ENCODE measurements at regions of chr1 and their contacts with region 1.

Region 1: DNA sequence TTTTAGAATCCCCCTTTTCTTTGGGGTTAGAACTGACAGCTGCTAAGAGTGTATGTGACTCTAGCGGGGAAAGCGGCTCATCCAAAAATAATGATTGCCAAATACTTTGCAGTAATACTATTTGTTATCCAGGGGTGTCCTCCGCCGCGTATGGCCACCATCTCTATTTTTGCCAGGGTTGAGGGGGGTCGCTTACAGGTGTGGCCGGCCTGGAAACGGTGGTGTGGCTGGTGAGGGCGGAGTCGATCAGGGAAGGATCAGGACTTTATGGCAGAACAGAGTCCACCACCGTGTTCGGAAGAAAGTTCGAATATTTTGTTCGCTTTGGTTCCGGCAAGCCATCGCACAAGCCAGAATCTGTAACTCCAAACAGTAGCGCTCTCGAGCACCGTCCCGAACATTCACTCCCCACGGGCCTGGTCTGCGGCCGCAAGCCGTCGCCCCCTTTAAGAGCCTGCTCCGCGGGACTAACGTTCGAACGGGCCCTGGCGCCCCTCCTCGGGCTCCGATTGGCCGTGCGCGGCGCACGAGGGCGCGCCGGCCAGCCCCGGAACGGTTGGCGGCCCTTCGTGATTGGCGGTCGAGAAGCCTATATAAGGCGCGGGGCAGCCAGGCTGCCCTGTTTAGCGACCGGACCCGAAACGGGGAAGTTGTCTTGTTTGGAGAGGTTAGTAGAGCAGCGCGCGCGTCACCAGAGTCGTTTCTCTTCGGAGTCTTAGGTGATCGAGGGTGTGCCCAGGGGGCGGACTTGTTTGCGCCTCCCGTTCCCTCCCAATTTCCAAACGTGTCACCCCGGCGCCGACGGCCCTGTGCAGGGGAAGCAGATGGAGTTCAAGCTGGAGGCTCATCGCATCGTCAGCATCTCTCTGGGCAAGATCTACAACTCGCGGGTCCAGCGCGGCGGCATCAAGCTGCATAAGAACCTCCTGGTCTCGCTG is at the start of gene IER5:
- DNase-seq: peak; percentile 97
- H3K4me3 Mint-ChIP-seq: peak within 1 kb of the TSS; percentile 93
- H3K27ac Mint-ChIP-seq: peak within 1 kb of the TSS; percentile 97
- H3K4me1 Mint-ChIP-seq: peaks cover 26% of the 10 kb centered on the region
- H3K27me3 Mint-ChIP-seq: no peaks in the 10 kb centered on the region
- CTCF ChIP-seq: no peak
- total RNA-seq, gene IER5: 11.4 and 12.2 TPM in 2 replicates

Region 2: GRCh38 chr1:180881806-180882509 is 206.4 kb before region 1 on chr1:
- CTCF ChIA-PET with region 1: interaction called, 9 read pairs
- intact Hi-C with region 1: loop called (anchors 5 kb)
- DNase-seq: no peak
- H3K4me3 Mint-ChIP-seq: no peak overlapping the region
- H3K27ac Mint-ChIP-seq: no peak overlapping the region
- H3K4me1 Mint-ChIP-seq: no peaks in the 10 kb centered on the region
- H3K27me3 Mint-ChIP-seq: no peaks in the 10 kb centered on the region
- CTCF ChIP-seq: no peak

Region 3: GRCh38 chr1:181038399-181038873 is 49.9 kb before region 1 on chr1:
- CTCF ChIA-PET with region 1: interaction called, 4 read pairs
- intact Hi-C with region 1: loop called (anchors 2 kb)
- DNase-seq: peak; percentile 77
- H3K4me3 Mint-ChIP-seq: no peak overlapping the region
- H3K27ac Mint-ChIP-seq: no peak overlapping the region
- H3K4me1 Mint-ChIP-seq: peaks cover 12% of the 10 kb centered on the region
- H3K27me3 Mint-ChIP-seq: no peaks in the 10 kb centered on the region
- CTCF ChIP-seq: peak; percentile 73

Region 4: DNA sequence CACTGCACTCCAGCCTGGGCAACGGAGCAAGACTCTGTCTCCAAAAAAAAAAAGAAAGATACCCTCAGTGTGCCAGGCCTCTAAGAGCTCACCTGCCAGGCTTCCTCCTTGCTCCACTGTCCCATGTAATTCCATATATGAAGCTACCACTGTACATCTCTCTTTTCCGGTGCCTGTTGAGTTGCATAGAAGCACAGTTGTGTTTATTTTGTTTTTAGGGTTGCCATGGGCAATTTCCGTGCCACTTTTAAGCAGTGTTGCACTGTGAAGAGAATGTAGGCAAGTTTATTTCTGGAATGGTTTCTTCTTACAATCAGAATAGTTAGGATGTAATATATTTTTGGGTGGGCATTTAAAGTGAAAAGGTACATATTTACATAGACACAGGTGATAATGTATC is 31.3 kb before region 1 on chr1:
- CTCF ChIA-PET with region 1: no interaction called
- intact Hi-C with region 1: no loop called
- DNase-seq: no peak
- H3K4me3 Mint-ChIP-seq: no peak overlapping the region
- H3K27ac Mint-ChIP-seq: no peak overlapping the region
- H3K4me1 Mint-ChIP-seq: no peaks in the 10 kb centered on the region
- H3K27me3 Mint-ChIP-seq: peaks cover 24% of the 10 kb centered on the region
- CTCF ChIP-seq: no peak

Region 5: GRCh38 chr1:181105134-181106021 is 17.0 kb after region 1 on chr1:
- CTCF ChIA-PET with region 1: interaction called, 7 read pairs
- intact Hi-C with region 1: loop called (anchors 2 kb)
- DNase-seq: peak; percentile 96
- H3K4me3 Mint-ChIP-seq: peak overlapping the region; percentile 75
- H3K27ac Mint-ChIP-seq: peak overlapping the region; percentile 81
- H3K4me1 Mint-ChIP-seq: peaks cover 43% of the 10 kb centered on the region
- H3K27me3 Mint-ChIP-seq: peaks cover 24% of the 10 kb centered on the region
- CTCF ChIP-seq: no peak